ENCODE measurements at regions of chr20 and their contacts with region 1.

Region 1: GRCh38 chr20:53915446-53916172 is 154.8 kb downstream of the BCAS1 start:
- DNase-seq: peak; percentile 95
- ATAC-seq: peak; percentile 88
- H3K4me3 ChIP-seq: peak overlapping the region; percentile 26 to 63
- H3K27ac ChIP-seq: peak overlapping the region; percentile 100
- H3K4me1 ChIP-seq: peaks cover 60% of the 10 kb centered on the region
- H3K27me3 ChIP-seq: no peaks in the 10 kb centered on the region
- CTCF ChIP-seq: peak; percentile 92

Region 2: DNA sequence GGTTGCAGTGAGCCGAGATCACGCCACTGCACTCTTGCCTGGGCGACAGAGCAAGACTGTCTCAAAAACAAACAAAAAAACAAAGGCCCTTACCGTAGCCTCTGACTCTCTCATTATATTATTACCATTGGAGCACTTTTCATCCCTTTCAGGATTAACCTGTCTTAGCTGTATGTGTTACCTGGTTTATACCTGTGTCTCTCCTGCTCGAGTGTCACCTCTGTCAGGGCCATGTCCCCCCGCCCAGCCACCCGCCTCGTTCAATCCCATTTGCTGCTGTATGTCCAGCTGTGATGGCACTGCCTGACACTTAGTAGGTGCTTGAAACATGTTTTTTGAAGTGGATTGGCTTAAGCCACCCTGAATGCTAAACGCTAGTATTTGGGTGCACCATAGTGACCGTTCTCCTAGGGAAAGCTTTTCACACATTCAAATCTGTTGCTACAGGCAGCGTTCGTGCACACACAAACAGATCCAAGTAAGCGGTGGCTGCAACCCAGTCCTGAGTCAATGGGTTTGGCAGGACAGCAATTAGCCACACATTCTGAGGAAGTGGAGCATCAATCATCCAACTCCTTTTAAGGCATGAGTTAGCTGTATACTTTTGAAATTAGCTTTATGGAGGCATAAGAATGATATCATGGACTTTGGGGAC is 223.1 kb before region 1 on chr20:
- CTCF ChIA-PET with region 1: no interaction called
- POLR2A ChIA-PET with region 1: interaction called, 10 read pairs
- in situ Hi-C with region 1: no loop called
- intact Hi-C with region 1: no loop called
- DNase-seq: no peak
- ATAC-seq: peak; percentile 82
- H3K4me3 ChIP-seq: no peak overlapping the region
- H3K27ac ChIP-seq: peak overlapping the region; percentile 85
- H3K4me1 ChIP-seq: peaks cover 28% of the 10 kb centered on the region
- H3K27me3 ChIP-seq: no peaks in the 10 kb centered on the region
- CTCF ChIP-seq: no peak

Region 3: GRCh38 chr20:53750827-53751619 is 164.6 kb before region 1 on chr20:
- CTCF ChIA-PET with region 1: no interaction called
- POLR2A ChIA-PET with region 1: no interaction called
- in situ Hi-C with region 1: no loop called
- intact Hi-C with region 1: loop called (anchors 10 kb)
- DNase-seq: no peak
- ATAC-seq: peak; percentile 52
- H3K4me3 ChIP-seq: no peak overlapping the region
- H3K27ac ChIP-seq: peak overlapping the region; percentile 98
- H3K4me1 ChIP-seq: peaks cover 75% of the 10 kb centered on the region
- H3K27me3 ChIP-seq: no peaks in the 10 kb centered on the region
- CTCF ChIP-seq: no peak

Region 4: GRCh38 chr20:53763707-53764414 is 151.7 kb before region 1 on chr20:
- CTCF ChIA-PET with region 1: no interaction called
- POLR2A ChIA-PET with region 1: interaction called, 10 read pairs
- in situ Hi-C with region 1: no loop called
- intact Hi-C with region 1: loop called (anchors 10 kb)
- DNase-seq: peak; percentile 70
- ATAC-seq: peak; percentile 74
- H3K4me3 ChIP-seq: peak overlapping the region in 1 of 2 experiments; percentile 36; a peak in 2 of 4 replicates
- H3K27ac ChIP-seq: peak overlapping the region; percentile 100
- H3K4me1 ChIP-seq: peaks cover 33% of the 10 kb centered on the region
- H3K27me3 ChIP-seq: no peaks in the 10 kb centered on the region
- CTCF ChIP-seq: no peak

Region 5: DNA sequence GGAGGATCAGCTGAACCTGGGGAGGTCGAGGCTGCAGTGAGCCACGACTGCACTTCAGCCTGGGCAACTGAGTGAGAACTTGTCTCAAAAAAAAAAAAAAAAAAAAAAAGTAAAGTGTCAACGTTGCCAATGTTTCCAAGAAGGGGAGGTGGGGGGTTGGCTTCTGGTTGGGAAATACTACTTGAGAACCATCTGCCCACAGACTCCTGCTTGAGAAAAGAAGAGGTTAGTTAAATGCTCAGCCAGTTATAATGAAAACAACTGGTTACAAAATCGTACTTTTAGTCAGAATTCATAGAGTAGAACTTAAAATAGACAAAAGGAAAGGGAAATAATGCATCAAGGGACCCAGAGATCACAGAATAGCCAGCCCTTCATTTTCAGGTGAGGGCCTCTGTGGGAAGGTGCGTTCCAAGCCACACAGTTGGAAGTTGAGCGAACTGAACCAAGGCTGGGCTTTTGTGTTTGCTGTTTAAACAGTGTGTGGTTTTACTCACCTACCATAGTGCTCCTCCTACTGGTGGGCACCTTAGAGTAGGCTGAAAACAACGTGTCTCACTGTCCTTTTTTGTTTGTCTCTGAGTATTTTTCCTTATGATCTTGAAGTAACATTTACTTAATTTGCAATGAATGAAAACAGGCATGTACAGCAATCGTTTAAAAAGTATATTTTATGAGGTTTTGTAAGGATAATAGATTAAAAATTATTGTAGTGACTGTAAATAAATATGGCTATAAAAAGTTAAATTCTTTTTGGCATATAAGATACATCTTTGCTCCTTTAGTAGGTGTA is 45.9 kb before region 1 on chr20:
- CTCF ChIA-PET with region 1: interaction called, 6 read pairs
- POLR2A ChIA-PET with region 1: interaction called, 7 read pairs
- in situ Hi-C with region 1: no loop called
- intact Hi-C with region 1: loop called (anchors 2 kb)
- DNase-seq: peak; percentile 84
- ATAC-seq: peak; percentile 75
- H3K4me3 ChIP-seq: peak overlapping the region in 1 of 2 experiments; percentile 3; a peak in 1 of 4 replicates
- H3K27ac ChIP-seq: peak overlapping the region; percentile 100
- H3K4me1 ChIP-seq: peaks cover 82% of the 10 kb centered on the region
- H3K27me3 ChIP-seq: no peaks in the 10 kb centered on the region
- CTCF ChIP-seq: peak; percentile 86

Region 6: DNA sequence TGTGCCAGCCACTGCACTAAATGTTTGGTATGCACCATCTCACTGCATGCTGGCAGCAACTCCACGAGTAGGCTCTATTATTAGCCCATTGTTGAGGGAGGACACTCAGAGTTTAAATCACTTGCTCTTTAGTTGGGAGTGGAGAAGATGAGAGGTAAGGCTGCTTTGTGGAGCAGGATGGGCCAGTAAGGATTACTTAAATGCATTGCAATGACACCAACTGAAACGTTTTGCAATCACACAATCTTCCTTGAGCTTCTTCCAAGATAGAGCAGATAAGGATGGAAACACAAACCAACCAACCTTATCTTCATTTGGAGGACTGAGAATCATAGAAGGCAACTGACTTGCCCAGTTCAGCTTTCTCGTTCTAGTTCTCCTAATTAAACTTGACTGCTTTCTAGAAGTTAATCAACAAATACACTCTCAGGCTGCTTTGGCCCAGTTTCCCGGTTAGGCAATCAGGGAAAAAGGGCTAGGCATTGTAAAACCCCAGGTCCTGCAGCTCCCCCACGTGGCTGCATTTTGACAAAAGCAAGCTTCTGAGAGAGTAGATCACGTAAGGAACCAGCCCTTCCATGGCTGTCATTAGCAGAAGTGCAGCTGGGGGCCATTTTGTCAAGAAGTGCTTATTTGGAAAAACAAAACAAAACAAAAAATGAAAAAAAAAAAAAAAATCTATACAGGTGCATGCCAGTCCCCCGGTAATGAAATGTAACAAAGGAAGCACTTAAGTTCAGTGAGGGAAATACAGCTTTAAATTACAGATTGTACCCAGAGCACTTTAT is 24.2 kb after region 1 on chr20:
- CTCF ChIA-PET with region 1: interaction called, 6 read pairs
- POLR2A ChIA-PET with region 1: no interaction called
- in situ Hi-C with region 1: no loop called
- intact Hi-C with region 1: loop called (anchors 2 kb)
- DNase-seq: peak; percentile 96
- ATAC-seq: peak; percentile 89
- H3K4me3 ChIP-seq: peak overlapping the region; percentile 15 to 38; a peak in 3 of 4 replicates
- H3K27ac ChIP-seq: peak overlapping the region; percentile 100
- H3K4me1 ChIP-seq: peaks cover 69% of the 10 kb centered on the region
- H3K27me3 ChIP-seq: no peaks in the 10 kb centered on the region
- CTCF ChIP-seq: peak; percentile 91

Region 7: GRCh38 chr20:53984356-53985149 is 68.9 kb after region 1 on chr20:
- CTCF ChIA-PET with region 1: no interaction called
- POLR2A ChIA-PET with region 1: no interaction called
- in situ Hi-C with region 1: no loop called
- intact Hi-C with region 1: no loop called
- DNase-seq: no peak
- ATAC-seq: no peak
- H3K4me3 ChIP-seq: no peak overlapping the region
- H3K27ac ChIP-seq: no peak overlapping the region
- H3K4me1 ChIP-seq: no peaks in the 10 kb centered on the region
- H3K27me3 ChIP-seq: no peaks in the 10 kb centered on the region
- CTCF ChIP-seq: no peak

Region 8: DNA sequence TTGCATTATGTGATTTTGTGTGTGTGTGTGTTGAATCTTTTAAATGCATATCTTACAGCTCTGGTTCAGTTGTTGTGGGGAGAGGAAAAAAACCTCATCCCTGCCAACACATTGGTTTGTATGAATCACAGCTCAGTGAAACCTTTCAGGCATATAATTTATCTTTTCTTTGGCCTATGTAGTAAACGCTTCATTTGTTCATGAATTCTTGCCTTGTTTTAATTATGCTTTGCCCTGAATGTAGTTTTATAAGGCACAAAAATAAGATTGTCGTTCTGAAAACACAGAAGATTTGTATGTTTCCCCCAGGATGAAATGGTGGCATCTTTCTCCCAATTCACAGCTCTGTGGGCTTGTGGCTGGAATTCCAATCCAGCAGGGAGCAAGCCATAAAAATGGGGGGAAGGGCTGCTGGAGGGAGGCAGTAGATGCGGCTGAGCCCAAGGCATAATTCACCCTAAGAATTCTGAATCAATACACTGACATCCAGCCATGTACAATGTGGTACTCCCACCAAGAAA is 109.7 kb after region 1 on chr20:
- CTCF ChIA-PET with region 1: no interaction called
- POLR2A ChIA-PET with region 1: no interaction called
- in situ Hi-C with region 1: no loop called
- intact Hi-C with region 1: no loop called
- DNase-seq: no peak
- ATAC-seq: 0 out of 2 replicates have a peak, but pooled peaks have one; percentile 26
- H3K4me3 ChIP-seq: no peak overlapping the region
- H3K27ac ChIP-seq: peak overlapping the region; percentile 13; the same call in 1 of the 2 replicates
- H3K4me1 ChIP-seq: no peaks in the 10 kb centered on the region; the same call in 1 of the 2 replicates
- H3K27me3 ChIP-seq: no peaks in the 10 kb centered on the region
- CTCF ChIP-seq: no peak

Region 9: DNA sequence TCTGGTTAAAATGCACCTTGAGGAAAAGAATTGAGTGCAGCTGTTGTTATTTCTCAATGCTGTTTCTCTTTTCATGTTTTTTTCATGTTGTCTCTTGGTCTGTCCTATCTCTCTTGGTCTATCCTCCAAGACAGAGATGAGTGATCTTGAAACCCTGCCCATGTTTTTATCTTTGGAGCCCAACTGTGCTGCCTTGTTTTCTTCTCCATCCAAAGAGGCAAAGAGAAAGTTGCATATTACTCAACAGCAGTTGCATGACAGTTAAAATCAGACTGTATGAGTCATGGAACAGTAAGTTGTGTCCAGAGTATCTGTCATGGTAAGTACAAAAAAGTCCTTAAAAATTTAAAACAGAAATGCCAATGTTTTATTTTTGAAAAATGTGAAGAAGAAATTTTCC is 128.5 kb after region 1 on chr20:
- CTCF ChIA-PET with region 1: no interaction called
- POLR2A ChIA-PET with region 1: no interaction called
- in situ Hi-C with region 1: no loop called
- intact Hi-C with region 1: no loop called
- DNase-seq: no peak
- ATAC-seq: 0 out of 2 replicates have a peak, but pooled peaks have one; percentile 42
- H3K4me3 ChIP-seq: no peak overlapping the region
- H3K27ac ChIP-seq: no peak overlapping the region
- H3K4me1 ChIP-seq: no peaks in the 10 kb centered on the region
- H3K27me3 ChIP-seq: no peaks in the 10 kb centered on the region
- CTCF ChIP-seq: no peak